ENCODE measurements at regions of chr16 and their contacts with region 1.

Region 1: GRCh38 chr16:12535535-12536411 is 267.9 kb downstream of the CPPED1 start:
- DNase-seq: peak; percentile 79
- H3K4me3 Mint-ChIP-seq: no peak overlapping the region
- H3K27ac Mint-ChIP-seq: peak overlapping the region; percentile 83
- H3K4me1 Mint-ChIP-seq: peaks cover 84% of the 10 kb centered on the region
- H3K27me3 Mint-ChIP-seq: no peaks in the 10 kb centered on the region

Region 2: DNA sequence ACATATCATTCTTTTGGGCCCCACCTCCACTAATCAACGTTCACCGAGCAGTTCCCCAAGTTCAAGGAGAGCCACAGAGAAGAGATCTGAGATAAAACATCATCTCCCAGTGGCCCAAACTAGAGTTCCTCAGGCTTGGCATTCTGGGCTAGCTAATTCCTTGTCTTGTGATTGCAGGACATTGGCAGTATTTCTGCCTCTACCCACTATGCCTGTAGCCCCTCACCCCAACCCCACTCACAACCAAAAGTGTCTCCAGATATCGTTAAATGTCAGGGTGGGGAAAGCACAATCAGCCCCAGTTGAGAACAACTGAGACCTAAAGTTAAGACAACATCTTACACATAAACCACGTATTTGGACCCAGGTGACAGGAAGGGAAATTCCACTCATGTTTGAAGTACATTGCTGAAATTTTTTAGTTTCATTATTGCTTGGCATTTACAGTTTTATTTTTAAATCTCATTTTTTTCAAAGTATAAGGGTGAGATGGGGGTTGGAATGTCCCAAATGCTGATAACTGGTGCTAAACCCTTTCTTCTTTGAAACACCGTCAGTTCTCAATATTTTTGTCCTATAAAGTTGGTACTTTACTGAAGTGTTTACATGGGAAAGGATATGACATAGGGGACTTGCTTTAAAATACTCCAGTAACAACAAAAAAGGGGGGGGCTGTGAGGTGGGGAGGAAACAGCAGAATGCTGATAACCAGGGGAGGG is 752.3 kb before region 1 on chr16:
- CTCF ChIA-PET with region 1: no interaction called
- intact Hi-C with region 1: loop called (anchors 5 kb)
- DNase-seq: peak; percentile 79
- H3K4me3 Mint-ChIP-seq: peak overlapping the region; percentile 71
- H3K27ac Mint-ChIP-seq: peak overlapping the region; percentile 98
- H3K4me1 Mint-ChIP-seq: peaks cover 72% of the 10 kb centered on the region
- H3K27me3 Mint-ChIP-seq: no peaks in the 10 kb centered on the region

Region 3: DNA sequence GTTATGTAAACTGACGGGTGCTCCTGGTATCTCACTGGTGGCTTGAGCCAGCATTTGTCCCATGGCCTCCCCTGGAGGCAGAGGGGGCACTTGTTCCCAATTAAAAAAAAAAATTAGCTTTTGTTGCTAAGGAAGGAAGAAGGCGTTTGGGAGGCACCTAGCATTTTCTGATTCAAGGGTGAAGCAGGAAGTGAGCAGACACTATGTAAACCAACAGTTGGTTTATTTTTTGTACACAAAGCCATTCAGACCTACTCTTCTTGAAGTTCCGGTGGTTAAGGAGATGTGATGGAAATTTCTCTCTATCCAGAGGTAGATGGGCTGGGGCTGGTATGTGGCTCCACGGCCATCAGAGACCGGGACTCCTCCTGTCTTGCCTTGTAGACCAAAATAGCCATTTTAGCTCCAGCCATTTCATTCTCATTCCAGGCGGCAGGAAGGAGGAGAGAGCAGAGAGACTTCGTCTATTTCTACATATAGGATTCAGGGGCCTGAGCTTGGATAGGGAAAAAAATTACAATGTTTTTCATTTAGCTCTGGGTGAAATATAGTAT is 456.3 kb before region 1 on chr16:
- CTCF ChIA-PET with region 1: no interaction called
- intact Hi-C with region 1: loop called (anchors 1 kb)
- DNase-seq: no peak
- H3K4me3 Mint-ChIP-seq: peak overlapping the region; percentile 59
- H3K27ac Mint-ChIP-seq: peak overlapping the region; percentile 96
- H3K4me1 Mint-ChIP-seq: peaks cover 74% of the 10 kb centered on the region
- H3K27me3 Mint-ChIP-seq: no peaks in the 10 kb centered on the region

Region 4: GRCh38 chr16:12375046-12375740 is 160.6 kb before region 1 on chr16:
- CTCF ChIA-PET with region 1: no interaction called
- intact Hi-C with region 1: no loop called
- DNase-seq: no peak
- H3K4me3 Mint-ChIP-seq: no peak overlapping the region
- H3K27ac Mint-ChIP-seq: no peak overlapping the region
- H3K4me1 Mint-ChIP-seq: peaks cover 21% of the 10 kb centered on the region
- H3K27me3 Mint-ChIP-seq: no peaks in the 10 kb centered on the region

Region 5: DNA sequence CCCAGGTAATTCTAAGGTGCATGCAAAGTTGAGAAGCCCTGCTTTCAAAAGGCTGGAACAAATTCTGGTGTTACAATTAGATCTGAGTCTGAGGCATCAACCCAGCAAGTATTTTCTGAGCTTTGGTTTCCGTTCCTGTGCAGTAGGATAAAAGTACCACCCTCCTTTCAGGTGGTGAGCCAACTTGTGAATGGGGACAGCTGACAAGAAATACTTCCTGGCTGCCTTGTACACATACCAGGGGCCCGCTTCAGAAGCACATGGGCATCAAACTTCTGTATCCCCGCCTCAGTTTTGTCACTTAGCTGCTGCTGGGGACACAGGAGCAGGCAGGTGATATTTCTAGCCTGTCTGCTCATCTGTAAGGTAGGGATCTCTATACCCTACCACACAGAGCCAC is 15.8 kb after region 1 on chr16:
- CTCF ChIA-PET with region 1: interaction called, 4 read pairs
- intact Hi-C with region 1: loop called (anchors 1 kb)
- DNase-seq: peak; percentile 60
- H3K4me3 Mint-ChIP-seq: no peak overlapping the region
- H3K27ac Mint-ChIP-seq: peak overlapping the region; percentile 22
- H3K4me1 Mint-ChIP-seq: peaks cover 34% of the 10 kb centered on the region
- H3K27me3 Mint-ChIP-seq: no peaks in the 10 kb centered on the region

Region 6: DNA sequence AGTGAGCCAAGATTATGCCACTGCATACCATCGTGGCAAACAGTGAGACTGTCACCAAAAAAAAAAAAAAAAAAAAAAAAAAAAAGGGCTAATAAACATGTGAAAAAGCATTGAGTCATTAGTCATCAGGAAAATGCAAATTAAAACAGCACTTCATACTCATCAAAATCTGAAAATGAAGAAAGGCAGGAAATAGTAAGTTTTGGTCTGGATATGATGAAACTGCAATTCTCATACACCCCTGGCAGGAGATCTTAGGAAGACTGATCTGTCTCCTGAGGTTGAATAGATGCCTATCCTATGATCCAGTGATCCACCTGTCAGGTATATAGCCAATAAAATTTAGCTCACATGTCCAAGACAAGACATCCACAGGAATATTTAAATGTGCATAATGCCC is 55.2 kb after region 1 on chr16:
- CTCF ChIA-PET with region 1: no interaction called
- intact Hi-C with region 1: loop called (anchors 1 kb)
- DNase-seq: no peak
- H3K4me3 Mint-ChIP-seq: no peak overlapping the region
- H3K27ac Mint-ChIP-seq: no peak overlapping the region
- H3K4me1 Mint-ChIP-seq: peaks cover 15% of the 10 kb centered on the region
- H3K27me3 Mint-ChIP-seq: peaks cover 12% of the 10 kb centered on the region

Region 7: DNA sequence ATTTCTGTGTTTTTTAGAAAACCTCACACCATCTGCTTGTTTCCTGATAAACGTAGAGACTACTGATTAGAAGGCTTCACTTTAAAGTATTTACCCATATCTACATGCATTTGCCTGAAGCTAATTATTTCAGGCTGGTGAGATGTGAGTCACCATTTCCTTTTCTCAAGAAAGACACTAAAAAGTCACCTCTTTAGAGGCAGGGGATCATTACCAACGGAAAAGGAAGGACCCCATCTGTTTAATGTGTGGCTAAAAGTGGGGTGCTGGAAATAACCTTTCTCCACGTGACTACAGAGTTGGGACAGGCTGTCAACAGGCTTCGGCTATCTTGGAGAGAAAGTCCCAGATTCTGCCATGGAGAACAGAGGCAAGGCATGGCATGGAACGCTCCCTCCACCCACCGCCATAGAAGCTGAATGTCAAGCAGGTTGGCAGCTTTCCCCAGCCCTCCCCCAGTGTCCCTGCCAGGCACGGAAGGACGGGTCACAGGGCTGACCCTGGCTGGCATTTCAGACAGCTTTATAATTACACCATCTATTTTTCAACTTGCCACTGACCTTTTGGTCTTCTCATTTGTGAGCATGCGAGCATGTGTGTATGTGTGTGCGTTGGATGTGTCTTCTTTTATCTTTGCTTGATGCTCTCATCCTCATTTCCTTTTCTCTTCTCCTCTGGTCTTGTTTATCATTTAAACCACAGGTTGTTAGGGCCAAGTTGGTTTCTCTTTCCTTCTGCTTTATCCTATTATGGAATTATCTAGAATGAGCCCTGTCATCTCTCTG is 110.9 kb after region 1 on chr16:
- CTCF ChIA-PET with region 1: no interaction called
- intact Hi-C with region 1: loop called (anchors 1 kb)
- DNase-seq: peak; percentile 53
- H3K4me3 Mint-ChIP-seq: peak overlapping the region; percentile 16
- H3K27ac Mint-ChIP-seq: peak overlapping the region; percentile 85
- H3K4me1 Mint-ChIP-seq: peaks cover 18% of the 10 kb centered on the region
- H3K27me3 Mint-ChIP-seq: no peaks in the 10 kb centered on the region

Region 8: DNA sequence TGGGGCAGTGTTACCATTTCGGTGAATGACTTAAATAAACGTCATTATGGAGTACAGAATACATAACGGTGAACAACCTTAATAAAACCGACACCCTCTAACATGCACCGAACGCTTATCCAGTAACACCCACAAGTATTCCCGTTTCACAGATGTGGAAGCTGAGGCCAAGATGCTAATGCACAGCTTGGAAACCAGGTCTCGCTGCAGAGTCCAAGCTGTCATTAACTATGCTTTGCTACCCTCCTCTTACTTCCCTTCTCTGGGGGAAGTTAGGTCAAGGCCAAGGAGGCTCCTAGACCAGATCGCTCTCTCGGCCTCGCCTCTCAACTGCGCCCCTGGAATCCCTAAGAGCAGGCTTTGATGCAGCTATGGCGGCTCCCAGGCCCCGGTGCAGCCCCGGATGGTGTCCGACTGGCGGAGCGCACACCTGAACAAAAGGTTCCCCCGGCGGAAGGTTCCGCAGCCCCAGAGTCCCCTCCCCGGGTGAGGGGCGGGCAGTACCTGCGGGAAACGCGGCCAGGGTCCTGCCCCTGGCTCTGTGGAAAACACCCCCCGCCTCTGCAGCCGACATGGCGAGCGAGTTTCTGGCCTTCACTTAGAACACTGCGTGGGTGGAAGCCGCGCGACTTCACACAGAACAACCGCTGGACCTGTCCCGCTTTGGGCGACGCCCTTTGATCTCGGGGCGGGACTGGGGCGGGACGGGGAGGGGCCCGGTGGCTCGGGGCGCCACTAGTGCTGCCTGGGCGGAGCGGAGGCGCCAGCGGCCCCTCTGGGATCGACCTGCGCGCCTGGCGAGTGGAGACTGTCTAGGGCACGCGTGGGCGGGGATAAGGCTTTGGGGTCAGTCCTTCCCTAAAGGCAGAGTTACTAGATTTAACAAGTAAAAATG is 267.7 kb after region 1 on chr16 and contains the start of gene CPPED1:
- CTCF ChIA-PET with region 1: no interaction called
- intact Hi-C with region 1: loop called (anchors 1 kb)
- DNase-seq: peak; percentile 92
- H3K4me3 Mint-ChIP-seq: peak within 1 kb of the TSS; percentile 91
- H3K27ac Mint-ChIP-seq: peak within 1 kb of the TSS; percentile 90
- H3K4me1 Mint-ChIP-seq: peaks cover 20% of the 10 kb centered on the region
- H3K27me3 Mint-ChIP-seq: no peaks in the 10 kb centered on the region
- total RNA-seq, gene CPPED1: 6.4 to 6.5 TPM

Measured in activated naive CD4-positive, alpha-beta T cell treated with anti-CD3 and anti-CD28 coated beads for 36 hours (primary cell).